ENCODE measurements at regions of chr1 and their contacts with region 1.

Region 1: DNA sequence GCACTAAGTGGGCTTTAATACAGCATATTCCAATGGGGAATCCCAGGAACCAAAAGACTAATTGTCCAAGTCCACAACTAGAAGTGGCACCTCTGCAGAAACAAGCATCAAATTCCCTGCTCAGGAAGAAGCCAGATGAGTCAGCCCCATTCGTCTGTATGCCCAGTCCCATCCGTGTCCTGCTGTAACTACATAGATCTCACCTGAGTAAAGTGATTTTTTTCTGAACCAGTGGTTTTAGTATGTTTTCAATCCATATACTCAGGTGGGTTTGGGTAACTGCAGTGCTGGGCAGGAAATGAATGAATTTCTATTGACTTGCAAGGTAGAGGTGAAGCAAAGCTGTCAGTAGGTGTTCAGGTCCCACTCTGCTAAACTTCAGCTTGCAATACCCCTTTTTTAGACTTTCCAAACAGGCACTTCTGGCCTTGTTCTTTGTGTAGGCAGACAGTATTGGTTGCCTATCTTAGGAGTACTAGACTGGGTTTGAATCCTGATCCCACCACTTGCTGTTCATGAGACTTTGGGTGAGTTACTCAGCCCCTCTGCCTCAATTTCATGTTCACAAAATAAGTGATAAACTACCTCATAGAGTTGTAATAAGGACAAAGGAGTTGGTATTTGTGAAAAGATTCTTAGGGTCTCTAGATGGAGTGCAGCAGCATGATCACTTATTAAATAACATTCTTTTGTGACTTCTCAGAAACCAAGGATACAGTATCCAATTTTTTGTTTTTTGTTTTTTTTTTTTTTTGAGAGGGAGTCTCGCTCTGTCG is 5.0 kb downstream of the RCC1 start:
- DNase-seq: peak; percentile 34
- ATAC-seq: peak; percentile 16
- H3K4me3 Mint-ChIP-seq: peak overlapping the region; percentile 98
- H3K27ac Mint-ChIP-seq: peak overlapping the region; percentile 99
- H3K4me1 Mint-ChIP-seq: peaks cover 33% of the 10 kb centered on the region
- H3K27me3 Mint-ChIP-seq: peaks cover 1% of the 10 kb centered on the region

Region 2: GRCh38 chr1:27719286-27720251 is 791.3 kb before region 1 on chr1:
- CTCF ChIA-PET with region 1: no interaction called
- POLR2A ChIA-PET with region 1: interaction called, 10 read pairs
- intact Hi-C with region 1: no loop called
- DNase-seq: peak; percentile 9
- ATAC-seq: no peak
- H3K4me3 Mint-ChIP-seq: no peak overlapping the region
- H3K27ac Mint-ChIP-seq: no peak overlapping the region
- H3K4me1 Mint-ChIP-seq: peaks cover 1% of the 10 kb centered on the region
- H3K27me3 Mint-ChIP-seq: peaks cover 6% of the 10 kb centered on the region

Region 3: GRCh38 chr1:28401760-28402159 is 109.1 kb before region 1 on chr1:
- CTCF ChIA-PET with region 1: no interaction called
- POLR2A ChIA-PET with region 1: no interaction called
- intact Hi-C with region 1: no loop called
- DNase-seq: no peak
- ATAC-seq: no peak
- H3K4me3 Mint-ChIP-seq: no peak overlapping the region
- H3K27ac Mint-ChIP-seq: no peak overlapping the region
- H3K4me1 Mint-ChIP-seq: no peaks in the 10 kb centered on the region
- H3K27me3 Mint-ChIP-seq: no peaks in the 10 kb centered on the region